PC-9 (cell line): ENCODE measurements at regions of chrX and their contacts with region 1.

Region 1: DNA sequence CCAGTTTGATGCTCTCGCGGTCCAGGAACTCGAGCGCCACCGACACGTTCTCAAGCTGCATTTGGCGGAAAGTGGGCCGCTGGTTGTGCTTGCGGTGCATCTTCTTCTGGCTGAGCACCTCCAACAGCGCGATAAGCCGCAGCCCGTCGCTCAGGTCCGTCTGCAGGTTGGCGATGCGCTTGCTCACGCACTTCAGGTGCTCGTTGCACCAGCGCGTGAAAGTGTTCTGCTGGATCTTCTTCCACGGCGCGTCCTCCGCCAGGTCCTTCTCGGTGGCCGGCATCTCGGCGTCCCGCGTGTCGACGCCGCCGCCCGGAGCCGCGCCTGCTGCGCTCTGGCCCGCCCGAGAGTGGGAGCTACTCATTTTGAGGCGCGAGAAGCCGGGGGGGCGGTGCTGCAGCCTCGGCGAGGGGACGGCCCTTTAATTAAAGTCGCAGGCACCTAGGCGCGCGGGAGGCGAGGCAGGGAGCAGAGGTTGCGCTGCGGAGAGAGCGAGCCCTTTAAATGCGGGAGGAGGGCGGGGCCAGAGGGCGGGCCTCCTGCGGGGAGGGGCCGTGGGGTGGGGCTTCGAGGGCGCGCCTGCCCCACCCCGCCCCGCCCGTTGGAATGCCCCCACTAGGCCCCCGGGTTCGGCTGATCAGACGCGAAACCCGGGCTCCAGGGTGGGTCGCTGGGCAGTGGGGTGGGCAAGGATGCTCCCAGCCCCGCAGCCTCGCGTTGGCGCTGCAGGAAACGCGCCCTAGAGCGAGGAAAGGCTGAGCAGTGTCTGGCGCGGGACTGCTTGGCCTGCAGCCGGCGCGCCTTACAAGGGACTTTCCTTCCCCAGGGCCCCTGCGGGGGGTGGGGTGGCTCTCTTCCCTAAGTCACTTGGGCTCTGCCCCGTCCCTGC is 3.3 kb downstream of the FLNA start:
- DNase-seq: peak; percentile 75 to 98
- H3K4me3 ChIP-seq: peak overlapping the region; percentile 60; the same call in 1 of the 2 replicates
- H3K27ac ChIP-seq: no peak overlapping the region
- H3K4me1 ChIP-seq: no peaks in the 10 kb centered on the region; the same call in 1 of the 2 replicates
- H3K27me3 ChIP-seq: no peaks in the 10 kb centered on the region
- CTCF ChIP-seq: no peak

Region 2: GRCh38 chrX:152941328-152942106 is 1429.6 kb before region 1 on chrX:
- CTCF ChIA-PET with region 1: no interaction called
- POLR2A ChIA-PET with region 1: no interaction called
- intact Hi-C with region 1: loop called (anchors 5 kb)
- DNase-seq: peak; percentile 86 to 97
- H3K4me3 ChIP-seq: peak overlapping the region; percentile 65
- H3K27ac ChIP-seq: no peak overlapping the region
- H3K4me1 ChIP-seq: peaks cover 5% of the 10 kb centered on the region; the same call in 1 of the 2 replicates
- H3K27me3 ChIP-seq: no peaks in the 10 kb centered on the region
- CTCF ChIP-seq: peak; percentile 92

Region 3: DNA sequence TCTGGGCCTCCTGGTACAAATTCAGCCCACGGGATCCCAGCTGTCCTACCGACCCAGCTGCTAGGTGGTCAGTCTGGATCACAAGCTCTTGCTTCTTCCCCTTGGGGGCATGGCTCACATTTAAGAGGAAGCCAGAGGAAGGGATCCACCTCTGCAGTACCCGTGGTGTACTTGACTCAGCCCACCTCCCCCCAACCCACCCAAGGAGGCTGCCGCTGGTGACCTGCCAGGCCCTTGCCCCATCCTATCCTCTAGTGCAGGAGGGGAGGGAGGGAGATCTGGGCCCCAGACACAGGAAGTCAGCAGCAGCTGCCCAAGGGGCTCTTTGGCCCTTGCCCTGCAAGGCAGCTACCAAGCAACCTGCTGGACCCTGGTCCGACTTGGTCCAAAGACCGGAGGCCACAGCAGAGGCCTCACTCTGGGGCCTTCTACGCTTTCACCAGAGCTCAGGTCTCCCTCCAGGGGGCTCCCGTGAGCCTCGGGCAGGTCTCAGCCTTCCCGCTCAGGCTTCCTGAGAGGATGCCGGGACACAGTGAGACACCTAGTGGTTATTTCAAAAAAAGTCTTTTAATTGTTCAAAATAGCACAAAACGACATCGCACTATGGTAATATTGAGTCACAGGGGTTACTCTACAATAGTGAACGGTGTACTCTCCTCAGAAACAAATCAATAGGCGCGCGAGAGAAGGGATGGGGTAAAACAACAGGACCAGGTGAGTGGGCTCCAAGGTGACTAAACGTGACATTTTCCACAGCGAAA is 423.9 kb before region 1 on chrX:
- CTCF ChIA-PET with region 1: no interaction called
- POLR2A ChIA-PET with region 1: interaction called, 11 read pairs
- intact Hi-C with region 1: no loop called
- DNase-seq: peak; percentile 58 to 86
- H3K4me3 ChIP-seq: no peak overlapping the region
- H3K27ac ChIP-seq: no peak overlapping the region
- H3K4me1 ChIP-seq: no peaks in the 10 kb centered on the region
- H3K27me3 ChIP-seq: no peaks in the 10 kb centered on the region
- CTCF ChIP-seq: peak; percentile 83

Region 4: GRCh38 chrX:154046031-154046781 is 324.9 kb before region 1 on chrX:
- CTCF ChIA-PET with region 1: no interaction called
- POLR2A ChIA-PET with region 1: no interaction called
- intact Hi-C with region 1: no loop called
- DNase-seq: no peak
- H3K4me3 ChIP-seq: no peak overlapping the region
- H3K27ac ChIP-seq: no peak overlapping the region
- H3K4me1 ChIP-seq: no peaks in the 10 kb centered on the region
- H3K27me3 ChIP-seq: no peaks in the 10 kb centered on the region
- CTCF ChIP-seq: no peak

Region 5: DNA sequence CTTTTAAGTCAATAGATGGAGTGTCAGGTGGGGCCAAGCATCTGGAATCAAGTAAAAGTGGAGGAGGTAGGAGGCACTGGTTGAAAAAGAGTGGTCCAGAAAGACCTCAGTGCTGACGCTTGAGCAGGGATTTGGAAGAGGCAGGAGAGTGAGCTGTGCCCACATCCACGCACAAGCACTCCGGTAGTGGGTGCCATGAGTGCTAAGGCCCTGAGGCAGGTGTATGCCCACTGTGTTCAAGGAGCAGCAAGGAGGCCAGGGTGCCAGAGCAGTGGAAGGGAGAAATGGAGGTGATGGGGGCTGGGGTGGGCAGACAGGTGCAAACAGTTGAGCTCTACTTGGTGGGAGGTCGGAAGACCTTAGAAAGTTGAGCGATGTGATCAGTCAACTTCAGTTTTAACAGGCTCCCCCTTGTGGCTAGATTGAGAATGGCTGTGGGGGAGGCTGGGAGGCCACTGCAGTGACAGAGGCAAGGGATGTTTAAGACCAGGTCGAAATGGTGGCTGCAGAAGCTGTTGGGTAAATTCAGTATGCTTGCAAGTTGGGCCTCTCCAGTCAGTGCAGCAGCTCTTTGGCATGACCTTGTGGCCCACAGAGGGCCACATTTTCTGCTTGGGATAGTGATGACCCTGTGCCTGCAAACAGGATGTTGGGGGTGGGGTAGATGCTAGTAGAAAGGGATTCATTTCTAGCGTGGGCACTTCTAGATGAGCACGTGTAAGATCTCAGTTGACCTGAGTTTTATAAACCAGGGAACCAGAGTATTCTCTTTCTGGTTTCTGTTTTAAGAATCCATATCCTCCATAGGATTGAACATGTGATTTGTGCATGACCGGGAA is 62.8 kb before region 1 on chrX:
- CTCF ChIA-PET with region 1: no interaction called
- POLR2A ChIA-PET with region 1: no interaction called
- intact Hi-C with region 1: no loop called
- DNase-seq: peak in 1 of 2 experiments; percentile 62
- H3K4me3 ChIP-seq: no peak overlapping the region
- H3K27ac ChIP-seq: no peak overlapping the region
- H3K4me1 ChIP-seq: no peaks in the 10 kb centered on the region
- H3K27me3 ChIP-seq: no peaks in the 10 kb centered on the region
- CTCF ChIP-seq: peak; percentile 77

Region 6: GRCh38 chrX:154411322-154411980 is 40.3 kb after region 1 on chrX and contains the start of gene TAFAZZIN:
- CTCF ChIA-PET with region 1: no interaction called
- POLR2A ChIA-PET with region 1: interaction called, 18 read pairs
- intact Hi-C with region 1: loop called (anchors 1 kb)
- DNase-seq: peak; percentile 41 to 80
- H3K4me3 ChIP-seq: peak within 1 kb of the TSS; percentile 77
- H3K27ac ChIP-seq: peak within 1 kb of the TSS; percentile 32
- H3K4me1 ChIP-seq: peaks cover 19% of the 10 kb centered on the region
- H3K27me3 ChIP-seq: no peaks in the 10 kb centered on the region
- CTCF ChIP-seq: no peak
- total RNA-seq, gene TAFAZZIN: 95.8 and 134 TPM in 2 replicates

Region 7: DNA sequence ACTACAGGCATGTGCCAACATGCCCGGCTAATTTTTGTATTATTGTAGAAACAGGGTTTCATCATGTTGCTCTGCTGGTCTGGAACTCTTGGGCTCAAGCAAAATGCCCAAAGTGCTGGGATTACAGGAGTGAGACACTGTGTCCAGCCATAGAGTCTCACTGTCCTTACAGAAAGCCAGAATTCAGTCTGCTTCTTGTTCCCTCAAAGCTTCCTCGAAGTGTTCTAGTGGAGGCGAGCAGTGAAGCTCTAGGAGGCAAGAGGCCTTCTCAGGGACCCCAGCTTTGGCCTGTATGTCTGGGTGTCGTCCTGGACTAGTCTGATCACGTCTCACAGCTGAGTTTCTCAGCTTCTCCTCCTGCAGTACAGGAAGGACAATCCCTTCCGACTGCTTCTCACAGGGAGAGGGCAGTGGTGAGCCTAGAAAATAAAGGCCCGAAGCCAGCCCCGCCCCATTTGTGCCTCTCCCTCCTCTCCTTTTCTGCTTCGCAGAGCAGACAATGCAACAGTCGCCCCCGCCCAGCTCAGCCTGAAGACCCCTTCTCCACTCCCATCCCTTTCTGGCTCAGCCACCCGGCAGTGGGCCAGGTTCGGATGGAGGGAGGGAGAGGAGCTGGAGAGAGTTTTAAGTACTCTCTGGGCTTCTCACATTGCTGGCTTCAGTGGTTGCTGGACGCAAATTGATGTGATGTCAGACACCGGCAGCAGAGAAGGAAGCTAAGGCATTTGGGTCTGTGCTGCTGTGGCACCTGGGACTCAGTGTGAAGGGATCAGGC is 156.0 kb after region 1 on chrX:
- CTCF ChIA-PET with region 1: interaction called, 20 read pairs
- POLR2A ChIA-PET with region 1: interaction called, 27 read pairs
- intact Hi-C with region 1: loop called (anchors 5 kb)
- DNase-seq: peak; percentile 63 to 83
- H3K4me3 ChIP-seq: no peak overlapping the region; the same call in 1 of the 2 replicates
- H3K27ac ChIP-seq: peak overlapping the region; percentile 52
- H3K4me1 ChIP-seq: peaks cover 25% of the 10 kb centered on the region
- H3K27me3 ChIP-seq: no peaks in the 10 kb centered on the region
- CTCF ChIP-seq: peak; percentile 61

Region 8: DNA sequence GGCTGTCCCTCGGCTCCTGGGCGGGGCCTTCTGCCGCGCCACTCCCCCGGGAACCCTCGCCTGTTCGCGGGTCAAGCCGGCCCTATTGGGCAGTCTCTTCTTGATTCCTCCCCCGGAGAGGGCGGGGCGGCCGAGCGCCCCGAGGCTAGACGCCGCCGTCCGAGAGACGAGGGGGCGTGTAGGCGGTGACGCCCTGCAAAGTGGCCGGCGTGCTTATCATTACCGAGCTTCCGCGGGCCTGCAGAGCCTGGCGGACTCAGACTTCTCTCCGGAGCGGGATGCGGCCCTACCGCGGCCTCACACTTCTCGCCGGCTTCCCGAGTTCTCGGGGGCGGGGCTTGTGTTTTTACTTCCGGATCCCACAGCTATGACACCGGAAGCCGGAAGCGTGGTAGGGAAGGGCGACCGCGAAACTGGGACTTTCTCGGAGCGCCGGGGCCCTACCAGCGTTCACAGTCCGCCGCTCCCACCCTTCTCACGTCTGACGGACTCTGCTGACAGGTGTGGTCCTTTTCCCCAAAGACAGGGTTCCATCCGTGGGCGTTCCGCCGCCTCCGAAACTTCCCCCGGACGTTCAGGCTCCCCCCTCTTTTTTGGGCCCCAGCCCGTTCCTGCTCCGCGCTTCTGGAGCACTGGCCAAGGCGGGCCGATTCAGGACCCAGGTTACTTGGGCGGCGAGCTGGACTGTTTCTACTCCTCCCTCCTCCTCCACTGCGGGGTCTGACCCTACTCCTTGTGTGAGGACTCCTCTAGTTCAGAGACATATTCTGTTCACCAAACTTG is 176.3 kb after region 1 on chrX and contains the start of gene IKBKG:
- CTCF ChIA-PET with region 1: interaction called, 12 read pairs
- POLR2A ChIA-PET with region 1: interaction called, 3 read pairs
- intact Hi-C with region 1: no loop called
- DNase-seq: peak; percentile 82 to 98
- H3K4me3 ChIP-seq: peak within 1 kb of the TSS; percentile 99
- H3K27ac ChIP-seq: peak within 1 kb of the TSS; percentile 100
- H3K4me1 ChIP-seq: peaks cover 27% of the 10 kb centered on the region
- H3K27me3 ChIP-seq: no peaks in the 10 kb centered on the region
- CTCF ChIP-seq: no peak
- total RNA-seq, gene IKBKG: 68.3 and 69.4 TPM in 2 replicates

Region 9: DNA sequence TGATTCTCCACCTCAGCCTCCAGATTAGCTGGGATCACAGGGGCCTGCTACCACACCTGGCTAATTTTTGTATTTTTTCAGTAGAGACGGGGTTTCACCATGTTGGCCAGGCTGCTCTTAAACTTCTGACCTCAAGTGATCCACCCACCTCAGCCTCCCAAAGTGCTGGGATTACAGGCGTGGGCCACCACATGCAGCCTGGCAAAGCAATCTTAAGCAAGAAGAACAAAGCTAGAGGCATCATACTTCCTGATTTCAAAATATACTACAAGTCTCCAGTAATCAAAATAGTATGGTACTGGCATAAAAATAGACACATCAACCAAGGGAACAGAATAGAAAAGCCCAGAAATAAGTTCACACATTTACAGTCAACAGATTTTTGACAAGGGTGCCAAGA is 502.2 kb after region 1 on chrX:
- CTCF ChIA-PET with region 1: no interaction called
- POLR2A ChIA-PET with region 1: no interaction called
- intact Hi-C with region 1: no loop called
- DNase-seq: no peak
- H3K4me3 ChIP-seq: no peak overlapping the region
- H3K27ac ChIP-seq: no peak overlapping the region
- H3K4me1 ChIP-seq: no peaks in the 10 kb centered on the region
- H3K27me3 ChIP-seq: no peaks in the 10 kb centered on the region
- CTCF ChIP-seq: no peak